ENCODE measurements at regions of chr19 and their contacts with region 1.

Region 1: GRCh38 chr19:42184401-42184861 is 33.0 kb downstream of the DEDD2 start:
- DNase-seq: peak; percentile 61
- ATAC-seq: peak; percentile 83
- H3K4me3 Mint-ChIP-seq: peak overlapping the region; percentile 2
- H3K27ac Mint-ChIP-seq: peak overlapping the region; percentile 30
- H3K4me1 Mint-ChIP-seq: peaks cover 37% of the 10 kb centered on the region
- H3K27me3 Mint-ChIP-seq: peaks cover 13% of the 10 kb centered on the region
- CTCF ChIP-seq: no peak

Region 2: GRCh38 chr19:42081584-42082203 is 102.7 kb before region 1 on chr19:
- CTCF ChIA-PET with region 1: interaction called, 3 read pairs
- POLR2A ChIA-PET with region 1: interaction called, 3 read pairs
- intact Hi-C with region 1: loop called (anchors 1 kb)
- DNase-seq: no peak
- ATAC-seq: peak; percentile 51
- H3K4me3 Mint-ChIP-seq: no peak overlapping the region
- H3K27ac Mint-ChIP-seq: peak overlapping the region; percentile 5
- H3K4me1 Mint-ChIP-seq: peaks cover 35% of the 10 kb centered on the region
- H3K27me3 Mint-ChIP-seq: no peaks in the 10 kb centered on the region
- CTCF ChIP-seq: no peak

Region 3: DNA sequence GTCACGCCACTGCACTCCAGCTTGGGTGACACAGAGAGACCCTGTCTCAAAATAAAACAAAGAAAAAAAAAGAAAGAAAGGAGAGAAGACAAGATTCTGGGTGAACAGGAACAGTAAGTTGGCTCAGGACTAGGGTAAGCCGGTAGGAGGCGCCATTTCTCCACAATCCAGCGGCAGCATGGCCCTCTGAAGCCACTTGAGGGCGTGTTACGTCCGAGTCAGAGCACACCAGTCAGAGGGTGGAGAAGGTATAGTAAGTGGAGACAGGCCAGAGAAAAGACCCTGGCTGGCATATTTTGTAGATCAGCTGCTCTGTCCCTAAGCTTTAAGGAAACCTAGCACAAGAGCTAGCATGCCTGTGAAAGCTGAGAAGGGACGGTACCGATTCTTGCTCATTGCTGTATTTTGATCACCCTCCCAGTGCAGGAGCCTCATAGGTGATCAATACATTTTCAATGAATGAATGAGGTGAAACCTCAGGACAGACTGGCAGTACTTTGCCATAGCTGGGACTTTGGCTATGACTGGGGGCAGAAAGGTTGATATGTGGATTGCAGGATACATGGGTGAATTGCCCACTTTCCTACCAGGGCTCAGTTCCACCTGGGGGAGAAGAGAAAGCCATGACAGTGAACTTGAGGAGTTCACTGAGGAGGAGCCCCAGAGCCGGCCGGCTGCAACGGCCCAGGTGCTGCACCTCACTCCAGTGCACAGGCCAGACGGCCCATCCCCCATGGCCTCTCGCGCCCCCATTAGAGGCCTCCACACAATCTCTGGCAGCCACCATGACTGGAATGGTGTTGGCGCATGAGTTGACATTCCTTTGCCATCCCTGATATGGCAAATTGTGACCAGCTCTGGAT is 75.7 kb before region 1 on chr19:
- CTCF ChIA-PET with region 1: interaction called, 20 read pairs
- POLR2A ChIA-PET with region 1: interaction called, 6 read pairs
- intact Hi-C with region 1: loop called (anchors 1 kb)
- DNase-seq: peak; percentile 76
- ATAC-seq: peak; percentile 92
- H3K4me3 Mint-ChIP-seq: peak overlapping the region; percentile 47
- H3K27ac Mint-ChIP-seq: peak overlapping the region; percentile 81
- H3K4me1 Mint-ChIP-seq: peaks cover 69% of the 10 kb centered on the region
- H3K27me3 Mint-ChIP-seq: no peaks in the 10 kb centered on the region
- CTCF ChIP-seq: peak; percentile 99

Region 4: DNA sequence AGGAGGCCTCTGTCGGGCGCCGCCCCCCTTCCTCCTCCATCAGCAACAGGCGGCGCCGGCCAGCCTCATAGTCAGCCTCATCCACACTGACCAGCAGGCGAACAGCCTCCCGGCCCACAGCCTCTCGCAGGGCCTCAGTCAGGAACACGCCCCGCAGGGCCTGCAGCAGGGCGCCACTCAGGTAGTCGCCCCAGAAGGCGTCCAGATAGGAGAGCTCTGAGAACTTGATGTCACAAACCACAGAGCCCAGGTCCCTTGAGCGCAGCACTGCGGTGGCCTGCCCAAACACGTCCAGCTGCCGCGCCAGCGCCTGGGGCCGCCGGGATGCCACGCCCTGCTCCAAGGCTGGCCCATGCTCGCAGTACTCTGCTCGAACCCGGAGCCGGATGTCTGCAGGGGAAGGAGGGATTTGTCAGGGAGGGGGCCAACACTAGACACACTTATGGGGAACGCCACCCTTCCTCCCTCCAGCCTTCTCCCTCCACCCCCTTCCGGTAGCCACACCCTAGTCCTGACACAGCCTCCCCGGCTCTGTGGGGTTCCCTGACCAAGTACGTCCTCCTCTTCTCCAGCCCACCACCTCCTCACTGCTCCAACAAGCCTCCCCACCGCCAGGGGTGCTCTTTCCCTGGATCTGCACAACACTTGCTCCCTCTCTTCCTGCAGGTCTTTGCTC is 15.1 kb after region 1 on chr19:
- CTCF ChIA-PET with region 1: interaction called, 7 read pairs
- POLR2A ChIA-PET with region 1: interaction called, 10 read pairs
- intact Hi-C with region 1: loop called (anchors 2 kb)
- DNase-seq: peak; percentile 47
- ATAC-seq: peak; percentile 44
- H3K4me3 Mint-ChIP-seq: peak overlapping the region; percentile 68
- H3K27ac Mint-ChIP-seq: peak overlapping the region; percentile 93
- H3K4me1 Mint-ChIP-seq: peaks cover 87% of the 10 kb centered on the region
- H3K27me3 Mint-ChIP-seq: no peaks in the 10 kb centered on the region
- CTCF ChIP-seq: no peak

Measured in activated B cell treated with CpG ODN at 0.5 μM for 24 hours (primary cell).